Panc1 (cell line): ENCODE measurements at regions of chr1 and their contacts with region 1.

Region 1: DNA sequence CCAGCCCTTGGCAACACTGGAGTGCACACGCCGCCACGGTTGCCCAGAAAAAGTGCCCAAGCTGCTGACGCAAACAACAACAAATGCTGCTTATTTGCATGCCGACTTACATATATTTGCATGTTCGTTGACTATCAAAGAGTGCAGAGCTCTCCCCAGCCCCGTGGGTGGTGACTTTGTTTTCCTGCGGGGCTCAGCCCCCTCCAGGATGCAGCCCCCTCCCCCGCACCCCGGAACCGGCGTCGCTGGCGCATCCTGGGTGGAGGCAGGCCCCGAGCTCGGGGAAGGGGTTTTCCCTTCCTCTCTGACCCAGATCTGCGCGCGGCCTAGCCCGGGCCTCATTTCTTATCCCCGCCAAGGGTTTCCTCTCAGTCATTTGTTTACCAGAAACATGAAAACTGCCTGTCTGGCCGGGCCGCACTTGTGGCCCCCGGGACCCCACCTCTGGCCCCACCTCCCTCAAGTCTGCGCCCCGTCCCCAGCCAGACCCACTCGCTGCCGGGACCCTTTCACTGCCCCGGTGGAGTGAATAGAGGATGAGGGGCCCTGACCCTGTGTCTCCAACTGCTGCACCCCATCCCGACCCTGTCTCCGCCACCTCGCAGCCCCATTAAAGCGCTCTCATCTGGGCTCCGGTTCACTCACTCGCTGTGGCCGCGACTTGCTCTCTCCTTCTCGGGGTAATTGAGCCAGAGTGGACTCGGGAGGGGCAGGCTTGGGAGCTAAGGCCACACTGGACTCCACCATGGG is 5.5 kb downstream of the TNFRSF25 start:
- DNase-seq: no peak
- ATAC-seq: no peak
- H3K4me3 ChIP-seq: no peak overlapping the region
- H3K27ac ChIP-seq: no peak overlapping the region
- H3K4me1 ChIP-seq: no peaks in the 10 kb centered on the region; the same call in 1 of the 2 replicates
- H3K27me3 ChIP-seq: no peaks in the 10 kb centered on the region
- CTCF ChIP-seq: no peak

Region 2: GRCh38 chr1:6099787-6100765 is 360.4 kb before region 1 on chr1:
- CTCF ChIA-PET with region 1: no interaction called
- POLR2A ChIA-PET with region 1: interaction called, 10 read pairs
- in situ Hi-C with region 1: no loop called
- intact Hi-C with region 1: no loop called
- DNase-seq: no peak
- ATAC-seq: peak; percentile 70
- H3K4me3 ChIP-seq: no peak overlapping the region
- H3K27ac ChIP-seq: no peak overlapping the region
- H3K4me1 ChIP-seq: peaks cover 9% of the 10 kb centered on the region; the same call in 1 of the 2 replicates
- H3K27me3 ChIP-seq: no peaks in the 10 kb centered on the region
- CTCF ChIP-seq: no peak; the same call in 1 of the 2 replicates

Region 3: DNA sequence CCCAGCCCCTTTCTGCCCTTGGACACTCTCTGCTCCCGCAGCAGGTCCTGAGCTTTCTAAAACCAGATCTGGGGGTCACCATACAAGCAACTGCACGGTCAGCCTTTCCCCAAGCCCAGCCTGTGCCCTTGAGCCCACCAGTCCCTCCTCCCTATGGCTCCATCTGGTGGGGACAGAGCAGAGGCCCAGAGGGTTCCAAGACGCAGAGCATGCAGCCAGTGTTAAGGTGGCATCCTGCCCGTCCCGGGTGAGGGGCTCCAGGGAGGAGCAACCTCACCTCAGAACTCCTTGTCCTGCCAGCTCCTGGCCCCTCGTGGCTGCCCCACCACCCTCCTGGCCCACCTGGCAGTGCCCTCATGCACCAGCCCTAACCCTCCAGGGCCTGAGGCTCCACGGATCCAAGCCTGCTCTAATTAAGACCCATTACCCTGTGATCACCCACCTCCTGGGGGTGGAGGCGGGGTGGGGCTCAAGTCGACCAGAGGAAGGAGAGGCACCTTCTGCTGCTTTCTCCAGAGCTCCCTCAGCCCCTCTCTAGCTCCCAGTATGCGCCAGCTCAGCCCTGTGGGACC is 288.8 kb before region 1 on chr1:
- CTCF ChIA-PET with region 1: no interaction called
- POLR2A ChIA-PET with region 1: no interaction called
- in situ Hi-C with region 1: no loop called
- intact Hi-C with region 1: no loop called
- DNase-seq: no peak
- ATAC-seq: peak; percentile 78
- H3K4me3 ChIP-seq: no peak overlapping the region
- H3K27ac ChIP-seq: peak overlapping the region; percentile 76
- H3K4me1 ChIP-seq: peaks cover 37% of the 10 kb centered on the region
- H3K27me3 ChIP-seq: no peaks in the 10 kb centered on the region
- CTCF ChIP-seq: peak; percentile 60